Activated B cell treated with CpG ODN at 0.5 μM for 24 hours (primary cell): ENCODE measurements at regions of chr18 and their contacts with region 1.

Region 1: DNA sequence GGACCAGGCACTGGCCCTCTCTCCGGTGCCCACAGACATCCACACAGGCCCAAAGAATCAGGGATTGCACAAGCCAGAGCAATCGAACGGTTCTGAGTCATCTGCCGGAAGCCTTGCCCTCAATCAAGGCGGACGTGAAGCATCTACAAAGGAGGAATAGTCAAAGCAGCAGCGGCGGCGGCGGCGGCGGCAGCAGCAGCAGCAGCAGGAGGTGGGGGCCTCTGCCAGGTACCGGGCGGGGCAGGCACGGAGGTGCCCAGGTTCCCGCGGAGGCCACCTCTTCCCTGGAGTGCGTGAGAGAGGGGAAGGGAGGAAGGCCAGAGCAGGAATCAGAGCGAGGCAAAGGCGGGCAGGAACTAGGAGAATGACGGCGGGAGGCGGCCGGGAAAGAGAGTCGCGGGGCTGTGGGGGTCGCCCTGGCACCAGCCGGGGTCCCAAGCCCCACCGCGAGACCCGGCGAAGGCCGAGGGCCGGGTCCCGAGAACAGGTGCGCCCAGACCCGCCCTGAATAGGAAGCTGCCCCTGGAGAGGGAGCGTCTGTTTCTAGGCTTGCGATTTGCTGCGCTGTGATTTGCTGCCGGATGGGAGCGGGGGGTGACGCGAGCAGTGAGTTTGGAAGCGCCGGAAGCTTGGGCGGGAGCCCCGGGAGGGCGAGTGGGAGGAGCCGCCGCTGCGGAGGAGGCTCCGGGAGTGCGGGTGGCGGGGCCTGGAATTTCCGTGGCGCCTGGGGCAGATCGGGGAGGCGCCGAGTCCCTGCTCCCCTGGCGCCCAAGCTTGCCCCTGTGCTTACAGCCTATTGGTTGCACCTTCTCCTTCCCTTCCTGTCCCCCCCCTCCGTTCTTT is at the start of gene SERPINB8:
- DNase-seq: peak; percentile 71
- ATAC-seq: peak; percentile 82
- H3K4me3 Mint-ChIP-seq: peak within 1 kb of the TSS; percentile 95
- H3K27ac Mint-ChIP-seq: peak within 1 kb of the TSS; percentile 94
- H3K4me1 Mint-ChIP-seq: peaks cover 51% of the 10 kb centered on the region
- H3K27me3 Mint-ChIP-seq: peaks cover 6% of the 10 kb centered on the region
- CTCF ChIP-seq: no peak
- total RNA-seq, gene SERPINB8: 20.9 and 29.5 TPM in 2 replicates

Region 2: DNA sequence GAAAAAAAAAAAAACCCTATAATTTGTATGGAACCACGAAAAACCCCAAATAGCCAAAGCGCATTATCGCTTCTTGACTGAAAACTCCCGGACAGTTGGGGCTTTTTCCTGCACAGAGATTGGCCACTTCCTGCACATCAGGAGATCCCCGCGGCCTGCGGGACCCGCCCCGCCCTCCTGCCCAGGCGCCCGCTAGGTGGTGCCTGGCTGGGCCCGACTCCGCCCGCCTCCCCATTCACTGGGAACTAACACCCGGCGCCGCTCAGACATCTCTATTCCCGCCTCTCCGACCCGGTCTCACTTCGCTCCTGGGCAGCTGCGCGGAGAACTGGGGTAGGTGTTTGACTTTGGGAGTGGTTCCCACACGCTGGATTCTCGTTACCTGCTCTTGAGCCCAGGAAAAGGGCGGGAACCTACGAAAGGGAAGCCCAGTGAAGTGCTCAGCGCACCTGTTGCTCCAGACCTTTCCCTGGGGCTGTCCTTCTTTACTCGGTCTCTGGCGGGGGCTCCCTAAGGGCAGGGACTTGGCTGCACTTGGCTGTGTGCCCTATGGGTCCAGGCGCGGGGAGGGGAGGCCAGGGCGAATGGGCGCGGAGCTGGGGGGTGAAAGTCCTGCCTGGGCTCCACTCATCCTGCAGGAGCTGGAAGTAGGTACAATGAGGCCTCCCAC is 21.0 kb before region 1 on chr18 and contains the start of gene HMSD:
- CTCF ChIA-PET with region 1: no interaction called
- POLR2A ChIA-PET with region 1: no interaction called
- intact Hi-C with region 1: loop called (anchors 1 kb)
- DNase-seq: peak; percentile 46
- ATAC-seq: peak; percentile 98
- H3K4me3 Mint-ChIP-seq: peak within 1 kb of the TSS; percentile 77
- H3K27ac Mint-ChIP-seq: no peak within 1 kb of the TSS
- H3K4me1 Mint-ChIP-seq: peaks cover 19% of the 10 kb centered on the region
- H3K27me3 Mint-ChIP-seq: peaks cover 13% of the 10 kb centered on the region
- CTCF ChIP-seq: no peak
- total RNA-seq, gene HMSD: 0.11 and 1.2 TPM in 2 replicates

Region 3: DNA sequence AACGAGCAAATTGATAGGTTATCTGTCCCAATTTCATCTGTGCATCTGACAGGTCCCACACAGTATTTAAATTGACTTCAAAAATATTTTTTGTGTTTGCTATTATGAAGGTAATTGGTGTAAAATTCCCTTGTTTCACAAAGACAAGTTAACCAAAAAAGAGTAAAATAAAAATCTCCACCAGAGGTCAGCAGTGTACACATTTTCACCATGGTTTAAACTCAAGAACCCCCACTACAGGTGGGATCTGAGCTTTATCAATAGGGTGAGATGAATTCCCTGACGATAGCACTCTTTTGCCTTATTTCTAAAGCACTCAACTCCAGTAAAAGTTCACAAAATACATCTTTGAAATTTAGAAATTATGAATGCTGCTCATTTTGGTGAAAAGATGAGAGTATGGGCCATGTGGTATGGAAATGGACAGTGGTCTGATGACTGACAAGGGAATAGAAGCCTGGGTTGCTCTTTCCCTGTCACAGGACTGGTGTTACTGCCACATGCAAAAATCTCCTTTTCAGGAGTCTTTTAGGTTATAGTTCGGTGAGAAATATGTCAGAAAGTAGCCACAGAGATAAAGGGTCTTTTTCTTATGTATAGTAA is 67.7 kb after region 1 on chr18:
- CTCF ChIA-PET with region 1: no interaction called
- POLR2A ChIA-PET with region 1: no interaction called
- intact Hi-C with region 1: no loop called
- DNase-seq: no peak
- ATAC-seq: peak; percentile 56
- H3K4me3 Mint-ChIP-seq: no peak overlapping the region
- H3K27ac Mint-ChIP-seq: no peak overlapping the region
- H3K4me1 Mint-ChIP-seq: no peaks in the 10 kb centered on the region
- H3K27me3 Mint-ChIP-seq: peaks cover 2% of the 10 kb centered on the region
- CTCF ChIP-seq: no peak